Dendritic cell treated with granulocyte-macrophage colony-stimulating factor and Interleukin-4, amounts not matched to agents 40 ng/mL and 50 ng/mL, for 4 days (primary cell): ENCODE measurements at regions of chr12 and their contacts with region 1.

Region 1: DNA sequence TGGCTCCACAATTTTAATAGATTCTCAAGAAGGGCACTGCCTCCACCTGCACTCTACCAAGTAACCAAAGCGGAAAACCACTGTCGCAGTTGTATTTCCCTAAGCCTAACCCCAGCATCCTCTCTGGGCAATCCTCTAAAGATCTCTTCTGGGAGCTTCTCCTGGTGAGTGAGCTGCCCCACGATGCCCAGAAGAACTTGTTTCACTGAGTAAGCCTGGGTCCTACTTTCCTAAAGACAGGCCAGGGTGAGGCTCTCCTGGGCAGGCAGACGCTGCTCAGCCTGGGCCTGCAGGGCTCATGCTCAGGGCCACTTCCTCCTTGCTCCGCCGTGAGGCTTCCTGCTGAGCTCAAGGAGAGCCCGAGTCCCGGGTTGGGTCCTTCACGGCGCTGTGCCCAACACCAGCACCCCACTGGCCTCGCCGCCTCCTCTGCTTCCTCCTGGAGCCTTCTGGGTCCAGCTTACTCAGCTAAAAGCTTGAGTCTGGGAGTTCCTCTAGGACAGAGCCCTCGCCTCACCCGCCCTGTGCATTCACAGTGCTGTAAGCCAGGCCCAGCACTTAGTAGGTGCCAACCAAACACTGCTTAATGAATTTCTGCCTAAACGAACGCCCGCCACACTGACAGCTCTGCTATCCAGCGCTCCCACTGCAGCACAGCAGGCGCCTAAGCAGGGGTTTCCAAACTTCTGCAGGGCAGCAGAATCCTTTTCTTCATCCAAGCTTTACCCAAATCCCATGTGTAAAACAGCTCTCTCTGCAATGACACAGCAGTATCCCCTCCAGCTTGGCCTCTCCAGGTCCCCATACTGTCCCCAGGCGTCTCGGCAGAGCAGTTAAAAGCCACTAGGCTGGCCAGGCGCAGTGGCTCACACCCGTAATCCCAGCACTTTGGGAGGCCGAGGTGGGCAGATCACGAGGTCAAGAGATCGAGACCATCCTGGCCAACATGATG is 5.7 kb downstream of the RAB35 start:
- H3K4me3 Mint-ChIP-seq: peak overlapping the region; percentile 69
- H3K27ac Mint-ChIP-seq: peak overlapping the region; percentile 90
- H3K4me1 Mint-ChIP-seq: peaks cover 87% of the 10 kb centered on the region
- H3K27me3 Mint-ChIP-seq: no peaks in the 10 kb centered on the region

Region 2: GRCh38 chr12:120086801-120087621 is 23.8 kb before region 1 on chr12:
- intact Hi-C with region 1: loop called (anchors 2 kb)
- H3K4me3 Mint-ChIP-seq: peak overlapping the region; percentile 63
- H3K27ac Mint-ChIP-seq: peak overlapping the region; percentile 62
- H3K4me1 Mint-ChIP-seq: peaks cover 25% of the 10 kb centered on the region
- H3K27me3 Mint-ChIP-seq: peaks cover 13% of the 10 kb centered on the region

Region 3: GRCh38 chr12:121391619-121392324 is 1280.9 kb after region 1 on chr12:
- intact Hi-C with region 1: no loop called
- H3K4me3 Mint-ChIP-seq: peak overlapping the region; percentile 32
- H3K27ac Mint-ChIP-seq: peak overlapping the region; percentile 79
- H3K4me1 Mint-ChIP-seq: peaks cover 21% of the 10 kb centered on the region
- H3K27me3 Mint-ChIP-seq: no peaks in the 10 kb centered on the region